ENCODE measurements at regions of chr6 and their contacts with region 1.

Region 1: DNA sequence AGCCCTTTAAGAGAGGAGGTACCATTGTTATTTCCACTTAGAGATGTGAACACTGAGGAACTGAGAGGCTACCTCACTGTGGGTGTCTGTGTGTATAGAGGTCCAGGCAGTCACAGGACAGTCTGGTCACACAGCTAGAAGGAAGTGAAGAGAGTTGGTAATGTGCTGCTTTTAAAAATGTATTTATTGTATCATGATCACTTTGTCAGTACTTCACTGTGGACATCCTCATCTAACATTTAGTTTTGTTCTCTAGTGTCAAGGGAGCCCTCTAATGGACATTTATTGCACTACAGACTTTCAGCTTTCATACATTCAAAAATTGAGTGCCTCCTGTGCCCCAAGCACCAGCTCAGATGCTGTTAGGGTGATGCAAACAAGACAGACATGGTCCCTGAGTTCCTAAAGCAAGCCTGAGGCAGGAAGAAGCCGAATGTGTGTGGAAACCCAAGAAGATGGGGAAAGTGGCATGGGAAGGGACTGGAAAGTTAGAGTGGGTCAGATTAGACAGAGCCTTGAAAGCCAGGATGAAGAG is 123.0 kb downstream of the SLC16A10 start:
- DNase-seq: peak; percentile 15
- H3K4me3 ChIP-seq: no peak overlapping the region
- H3K27me3 ChIP-seq: 0 out of 2 replicates have a peak, but pooled peaks cover 1% of the 10 kb centered on the region
- CTCF ChIP-seq: peak; percentile 74

Region 2: GRCh38 chr6:110958329-110959192 is 251.7 kb before region 1 on chr6 and contains the start of gene GTF3C6:
- CTCF ChIA-PET with region 1: no interaction called
- POLR2A ChIA-PET with region 1: interaction called, 10 read pairs
- DNase-seq: peak; percentile 41
- H3K4me3 ChIP-seq: peak within 1 kb of the TSS; percentile 87
- H3K27me3 ChIP-seq: no peaks in the 10 kb centered on the region
- CTCF ChIP-seq: no peak
- polyA plus RNA-seq, gene GTF3C6: 9.1 and 32.4 TPM in 2 replicates

Region 3: GRCh38 chr6:111057074-111057752 is 153.0 kb before region 1 on chr6:
- CTCF ChIA-PET with region 1: interaction called, 16 read pairs
- POLR2A ChIA-PET with region 1: no interaction called
- DNase-seq: no peak
- H3K4me3 ChIP-seq: no peak overlapping the region
- H3K27me3 ChIP-seq: no peaks in the 10 kb centered on the region; the same call in 1 of the 2 replicates
- CTCF ChIP-seq: peak; percentile 80

Region 4: GRCh38 chr6:111162504-111162903 is 47.8 kb before region 1 on chr6:
- CTCF ChIA-PET with region 1: no interaction called
- POLR2A ChIA-PET with region 1: no interaction called
- DNase-seq: no peak
- H3K4me3 ChIP-seq: no peak overlapping the region
- H3K27me3 ChIP-seq: peaks cover 2% of the 10 kb centered on the region
- CTCF ChIP-seq: no peak

Region 5: DNA sequence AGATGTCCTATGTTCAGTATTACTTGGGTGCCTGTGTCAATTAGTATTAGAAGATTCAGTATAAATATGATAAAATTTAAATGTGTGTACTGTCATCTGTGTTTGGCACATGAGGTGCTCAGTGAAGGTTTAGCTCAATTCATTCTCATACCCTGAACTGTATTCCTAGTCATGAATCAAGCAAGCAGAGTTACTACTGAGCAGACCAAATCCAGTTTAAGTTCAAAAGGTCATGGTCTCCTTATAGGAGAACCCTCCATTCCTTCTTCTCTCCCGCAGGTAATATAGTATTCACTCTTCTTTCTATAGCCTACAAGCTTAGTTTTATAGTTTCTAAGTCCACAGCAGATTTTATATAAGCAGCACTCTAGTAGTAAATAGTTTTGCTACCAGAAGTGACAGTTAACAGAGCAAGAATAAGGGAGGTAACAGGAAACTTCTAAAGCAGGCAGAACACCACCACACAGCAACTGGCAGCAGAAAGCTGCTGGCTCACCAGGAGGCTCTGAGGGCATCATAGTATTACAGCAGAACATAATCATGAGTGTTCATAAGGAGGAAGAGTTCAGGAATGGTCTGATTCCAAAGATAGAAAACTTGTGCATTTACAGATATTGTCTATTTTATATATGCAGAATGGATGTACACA is 10.2 kb after region 1 on chr6:
- CTCF ChIA-PET with region 1: interaction called, 23 read pairs
- POLR2A ChIA-PET with region 1: no interaction called
- DNase-seq: no peak
- H3K4me3 ChIP-seq: no peak overlapping the region
- H3K27me3 ChIP-seq: no peaks in the 10 kb centered on the region
- CTCF ChIP-seq: no peak

Region 6: GRCh38 chr6:111228094-111228493 is 17.8 kb after region 1 on chr6:
- CTCF ChIA-PET with region 1: interaction called, 12 read pairs
- POLR2A ChIA-PET with region 1: no interaction called
- DNase-seq: no peak
- H3K4me3 ChIP-seq: no peak overlapping the region
- H3K27me3 ChIP-seq: no peaks in the 10 kb centered on the region
- CTCF ChIP-seq: no peak

Measured in BJ (cell line).